GM12878 (cell line): ENCODE measurements at regions of chr11 and their contacts with region 1.

Region 1: GRCh38 chr11:88292171-88292843 is 45.2 kb downstream of the CTSC start:
- DNase-seq: no peak
- ATAC-seq: no peak
- H3K4me3 ChIP-seq: no peak overlapping the region
- H3K27ac ChIP-seq: no peak overlapping the region
- H3K4me1 ChIP-seq: peaks cover 22% of the 10 kb centered on the region
- H3K27me3 ChIP-seq: no peaks in the 10 kb centered on the region
- CTCF ChIP-seq: no peak
- EP300 ChIP-seq: no peak
- POLR2A ChIP-seq: no peak
- RAD21 ChIP-seq: no peak

Region 2: DNA sequence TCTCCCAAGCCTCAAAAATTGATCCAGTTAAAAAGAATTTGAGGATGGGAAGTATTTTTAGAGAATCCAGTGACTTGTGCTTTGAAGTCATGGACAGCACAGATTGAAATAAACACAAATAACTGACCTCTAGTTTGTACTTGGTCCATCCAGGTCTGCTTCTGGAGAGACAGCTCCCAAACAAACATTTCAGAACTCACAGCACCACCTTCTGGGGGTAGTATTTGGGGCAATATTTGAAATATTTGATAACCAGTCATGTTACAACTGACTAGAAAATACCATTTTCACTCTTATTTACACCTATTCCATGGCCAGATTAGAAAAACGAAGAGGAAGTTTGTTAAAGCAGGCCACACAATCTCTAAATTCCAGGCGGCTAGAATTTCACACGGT is 11.0 kb before region 1 on chr11:
- CTCF ChIA-PET with region 1: interaction called, 6 read pairs
- POLR2A ChIA-PET with region 1: interaction called, 4 read pairs
- RAD21 ChIA-PET with region 1: interaction called, 3 read pairs
- SMC1A ChIA-PET with region 1: interaction called, 22 read pairs
- in situ Hi-C with region 1: no loop called
- intact Hi-C with region 1: no loop called
- DNase-seq: no peak
- ATAC-seq: peak; percentile 48; the same call in 2 of the 3 replicates
- H3K4me3 ChIP-seq: no peak overlapping the region
- H3K27ac ChIP-seq: no peak overlapping the region
- H3K4me1 ChIP-seq: no peaks in the 10 kb centered on the region
- H3K27me3 ChIP-seq: no peaks in the 10 kb centered on the region
- CTCF ChIP-seq: peak in 2 of 3 experiments; percentile 31 to 39; a peak in 2 of 6 replicates
- EP300 ChIP-seq: no peak
- POLR2A ChIP-seq: no peak
- RAD21 ChIP-seq: peak; percentile 43

Region 3: DNA sequence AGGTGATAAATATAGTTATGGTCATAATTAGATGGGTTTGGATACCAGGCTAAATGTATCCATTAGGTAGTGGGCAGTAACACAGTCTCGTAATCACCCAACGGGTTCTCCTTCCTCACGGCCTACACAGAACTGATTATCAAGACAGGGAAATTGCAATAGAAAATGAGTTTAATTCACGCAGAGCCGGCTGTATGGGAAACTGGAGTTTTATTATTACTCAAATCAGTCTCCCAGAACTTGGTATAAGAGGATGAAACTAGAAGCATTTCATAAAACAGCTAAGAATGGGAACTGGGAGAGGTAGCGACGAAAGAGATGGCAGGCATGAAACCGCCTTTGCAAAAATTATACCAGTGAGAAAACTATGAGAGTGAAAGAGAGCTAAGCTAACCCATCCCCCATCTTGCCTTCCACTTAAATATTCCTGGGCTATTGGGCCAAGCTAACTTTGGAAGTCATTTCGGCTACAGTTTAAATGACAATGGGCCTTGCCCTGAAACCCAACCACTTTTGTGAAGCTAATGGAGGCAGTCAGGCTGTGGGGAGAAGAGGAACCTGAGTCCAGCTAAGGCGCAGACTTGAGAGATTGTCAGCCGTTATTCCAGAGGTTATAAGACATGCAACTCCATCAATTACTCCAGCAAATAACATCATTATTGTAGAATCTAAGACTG is 15.6 kb after region 1 on chr11:
- CTCF ChIA-PET with region 1: interaction called, 4 read pairs
- POLR2A ChIA-PET with region 1: interaction called, 3 read pairs
- RAD21 ChIA-PET with region 1: interaction called, 12 read pairs
- SMC1A ChIA-PET with region 1: interaction called, 37 read pairs
- in situ Hi-C with region 1: no loop called
- intact Hi-C with region 1: no loop called
- DNase-seq: peak; percentile 81
- ATAC-seq: peak; percentile 78
- H3K4me3 ChIP-seq: peak overlapping the region; percentile 6; the same call in 1 of the 2 replicates
- H3K27ac ChIP-seq: peak overlapping the region; percentile 75
- H3K4me1 ChIP-seq: peaks cover 33% of the 10 kb centered on the region
- H3K27me3 ChIP-seq: no peaks in the 10 kb centered on the region
- CTCF ChIP-seq: no peak
- EP300 ChIP-seq: peak; percentile 47 to 76; a peak in 3 of 4 replicates
- POLR2A ChIP-seq: no peak
- RAD21 ChIP-seq: no peak

Region 4: GRCh38 chr11:88327061-88327460 is 34.8 kb after region 1 on chr11:
- CTCF ChIA-PET with region 1: no interaction called
- POLR2A ChIA-PET with region 1: interaction called, 4 read pairs
- RAD21 ChIA-PET with region 1: interaction called, 58 read pairs
- SMC1A ChIA-PET with region 1: interaction called, 288 read pairs
- in situ Hi-C with region 1: no loop called
- intact Hi-C with region 1: no loop called
- DNase-seq: no peak
- ATAC-seq: peak; percentile 44
- H3K4me3 ChIP-seq: peak overlapping the region; percentile 23; the same call in 1 of the 2 replicates
- H3K27ac ChIP-seq: peak overlapping the region; percentile 67; the same call in 1 of the 2 replicates
- H3K4me1 ChIP-seq: peaks cover 42% of the 10 kb centered on the region
- H3K27me3 ChIP-seq: no peaks in the 10 kb centered on the region
- CTCF ChIP-seq: no peak
- EP300 ChIP-seq: peak; percentile 46 to 80; a peak in 1 of 4 replicates
- POLR2A ChIP-seq: no peak
- RAD21 ChIP-seq: no peak

Region 5: DNA sequence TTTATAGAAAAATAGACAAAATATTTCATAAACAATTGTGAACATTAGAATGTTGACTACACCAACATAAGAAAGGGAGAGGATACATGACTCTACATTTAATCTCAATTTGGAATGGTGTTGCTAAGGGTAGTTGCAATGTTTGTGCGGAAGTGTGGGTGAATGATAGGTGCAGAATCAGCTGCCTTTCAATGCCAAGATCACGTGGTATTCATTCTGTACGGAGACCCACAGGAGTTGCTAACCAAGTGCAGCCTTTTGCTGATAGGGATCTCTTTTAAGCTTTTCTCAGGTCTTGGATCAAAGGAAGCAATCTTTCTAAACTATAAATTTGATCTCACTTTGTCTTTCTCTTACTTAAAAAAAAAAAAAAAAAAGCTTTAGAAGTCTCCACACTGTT is 75.0 kb after region 1 on chr11:
- CTCF ChIA-PET with region 1: no interaction called
- POLR2A ChIA-PET with region 1: no interaction called
- RAD21 ChIA-PET with region 1: no interaction called
- SMC1A ChIA-PET with region 1: no interaction called
- in situ Hi-C with region 1: no loop called
- intact Hi-C with region 1: no loop called
- DNase-seq: no peak
- ATAC-seq: no peak
- H3K4me3 ChIP-seq: no peak overlapping the region
- H3K27ac ChIP-seq: no peak overlapping the region
- H3K4me1 ChIP-seq: peaks cover 10% of the 10 kb centered on the region
- H3K27me3 ChIP-seq: no peaks in the 10 kb centered on the region
- CTCF ChIP-seq: no peak
- EP300 ChIP-seq: no peak
- POLR2A ChIP-seq: no peak
- RAD21 ChIP-seq: no peak

Region 6: GRCh38 chr11:88523379-88524071 is 231.2 kb after region 1 on chr11:
- CTCF ChIA-PET with region 1: no interaction called
- POLR2A ChIA-PET with region 1: no interaction called
- RAD21 ChIA-PET with region 1: no interaction called
- SMC1A ChIA-PET with region 1: no interaction called
- in situ Hi-C with region 1: no loop called
- intact Hi-C with region 1: no loop called
- DNase-seq: no peak
- ATAC-seq: no peak
- H3K4me3 ChIP-seq: no peak overlapping the region
- H3K27ac ChIP-seq: no peak overlapping the region
- H3K4me1 ChIP-seq: no peaks in the 10 kb centered on the region
- H3K27me3 ChIP-seq: no peaks in the 10 kb centered on the region
- CTCF ChIP-seq: no peak
- EP300 ChIP-seq: no peak
- POLR2A ChIP-seq: no peak
- RAD21 ChIP-seq: no peak